Naive thymus-derived CD4-positive, alpha-beta T cell (primary cell): ENCODE measurements at regions of chr12 and their contacts with region 1.

Region 1: GRCh38 chr12:121668750-121669520 is 519 bp downstream of the MORN3 start:
- DNase-seq: peak in 7 of 9 donors; percentile 32 to 66 (median 56)
- ATAC-seq: no peak
- H3K4me3 ChIP-seq: no peak overlapping the region
- H3K4me3 Mint-ChIP-seq: peak overlapping the region in 9 of 10 donors; percentile 34 to 62 (median 54)
- H3K27ac ChIP-seq: peak overlapping the region; percentile 36
- H3K27ac Mint-ChIP-seq: peak overlapping the region; percentile 49 to 93 (median 75)
- H3K4me1 ChIP-seq: peaks cover 16 to 53% of the 10 kb centered on the region in 2 donors
- H3K4me1 Mint-ChIP-seq: peaks cover 44 to 71% (median 57%) of the 10 kb centered on the region in 7 donors
- H3K27me3 ChIP-seq: no peaks in the 10 kb centered on the region
- H3K27me3 Mint-ChIP-seq: no peaks in the 10 kb centered on the region

Region 2: GRCh38 chr12:121499929-121500793 is 168.8 kb before region 1 on chr12:
- CTCF ChIA-PET with region 1: interaction called, 5 read pairs
- POLR2A ChIA-PET with region 1: interaction called, 6 read pairs
- intact Hi-C with region 1: loop called in 1 of 2 experiments (anchors 1 kb)
- DNase-seq: peak; percentile 44 to 80 (median 68)
- ATAC-seq: peak; percentile 93
- H3K4me3 ChIP-seq: no peak overlapping the region
- H3K4me3 Mint-ChIP-seq: no peak overlapping the region
- H3K27ac ChIP-seq: no peak overlapping the region
- H3K27ac Mint-ChIP-seq: peak overlapping the region in 2 of 9 donors; percentile 8 to 32
- H3K4me1 ChIP-seq: peaks cover 0 to 11% of the 10 kb centered on the region in 2 donors
- H3K4me1 Mint-ChIP-seq: peaks cover 0 to 19% (median 13%) of the 10 kb centered on the region in 7 donors
- H3K27me3 ChIP-seq: no peaks in the 10 kb centered on the region
- H3K27me3 Mint-ChIP-seq: no peaks in the 10 kb centered on the region

Region 3: GRCh38 chr12:121590476-121591143 is 78.3 kb before region 1 on chr12:
- CTCF ChIA-PET with region 1: interaction called, 3 read pairs
- POLR2A ChIA-PET with region 1: interaction called, 10 read pairs
- intact Hi-C with region 1: loop called (anchors 1 kb)
- DNase-seq: peak; percentile 38 to 88 (median 83)
- ATAC-seq: peak; percentile 81
- H3K4me3 ChIP-seq: peak overlapping the region; percentile 76
- H3K4me3 Mint-ChIP-seq: peak overlapping the region; percentile 59 to 94 (median 90)
- H3K27ac ChIP-seq: peak overlapping the region; percentile 90
- H3K27ac Mint-ChIP-seq: peak overlapping the region; percentile 97 to 100 (median 99)
- H3K4me1 ChIP-seq: peaks cover 24 to 26% of the 10 kb centered on the region in 2 donors
- H3K4me1 Mint-ChIP-seq: peaks cover 16 to 53% (median 38%) of the 10 kb centered on the region in 7 donors
- H3K27me3 ChIP-seq: no peaks in the 10 kb centered on the region
- H3K27me3 Mint-ChIP-seq: peaks cover 0 to 3% (median 0%) of the 10 kb centered on the region in 5 donors

Region 4: DNA sequence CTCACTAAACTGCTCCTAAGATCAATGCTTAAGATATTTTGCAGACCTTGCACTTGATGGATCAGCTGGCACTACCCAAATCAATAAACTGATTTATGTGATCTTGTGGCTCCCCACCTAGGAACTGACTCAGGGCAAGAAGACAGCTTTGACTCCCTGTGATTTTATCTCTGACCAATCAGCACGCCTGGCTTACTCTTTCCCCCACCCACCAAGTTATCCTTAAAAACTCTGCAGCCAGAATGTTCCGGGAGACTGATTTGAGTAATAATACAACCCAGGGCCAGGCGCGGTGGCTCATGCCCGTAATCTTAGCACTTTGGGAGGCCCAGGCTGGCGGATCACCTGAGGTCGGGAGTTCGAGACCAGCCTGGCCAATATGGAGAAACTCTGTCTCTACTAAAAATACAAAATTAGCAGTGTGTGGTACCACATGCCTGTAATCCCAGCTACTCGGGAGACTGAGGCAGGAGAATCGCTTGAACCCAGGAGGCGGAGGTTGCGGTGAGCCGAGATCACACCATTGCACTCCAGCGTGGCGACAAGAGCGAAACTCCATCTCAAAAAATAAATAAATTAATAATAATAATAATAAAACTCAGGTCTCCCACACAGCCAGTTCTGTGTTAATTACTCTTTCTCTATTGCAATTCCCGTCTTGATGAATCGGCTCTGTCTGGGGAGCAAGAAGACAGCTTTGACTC is 11.5 kb before region 1 on chr12:
- CTCF ChIA-PET with region 1: interaction called, 17 read pairs
- POLR2A ChIA-PET with region 1: interaction called, 54 read pairs
- intact Hi-C with region 1: loop called (anchors 1 kb)
- DNase-seq: peak in 1 of 9 donors; percentile 37
- ATAC-seq: no peak
- H3K4me3 ChIP-seq: no peak overlapping the region
- H3K4me3 Mint-ChIP-seq: peak overlapping the region; percentile 31 to 99 (median 68)
- H3K27ac ChIP-seq: peak overlapping the region; percentile 35
- H3K27ac Mint-ChIP-seq: peak overlapping the region; percentile 70 to 100 (median 97)
- H3K4me1 ChIP-seq: peaks cover 38 to 47% of the 10 kb centered on the region in 2 donors
- H3K4me1 Mint-ChIP-seq: peaks cover 43 to 77% (median 64%) of the 10 kb centered on the region in 7 donors
- H3K27me3 ChIP-seq: no peaks in the 10 kb centered on the region
- H3K27me3 Mint-ChIP-seq: no peaks in the 10 kb centered on the region

Region 5: GRCh38 chr12:121712461-121713256 is 43.7 kb after region 1 on chr12 and contains the start of gene TMEM120B:
- CTCF ChIA-PET with region 1: no interaction called
- POLR2A ChIA-PET with region 1: interaction called, 17 read pairs
- intact Hi-C with region 1: no loop called
- DNase-seq: peak; percentile 75 to 91 (median 86)
- ATAC-seq: peak; percentile 97
- H3K4me3 ChIP-seq: peak within 1 kb of the TSS; percentile 99
- H3K4me3 Mint-ChIP-seq: peak within 1 kb of the TSS; percentile 84 to 97 (median 94)
- H3K27ac ChIP-seq: peak within 1 kb of the TSS; percentile 82
- H3K27ac Mint-ChIP-seq: peak within 1 kb of the TSS; percentile 86 to 96 (median 92)
- H3K4me1 ChIP-seq: peaks cover 11 to 12% of the 10 kb centered on the region in 2 donors
- H3K4me1 Mint-ChIP-seq: peaks cover 7 to 37% (median 26%) of the 10 kb centered on the region in 7 donors
- H3K27me3 ChIP-seq: no peaks in the 10 kb centered on the region
- H3K27me3 Mint-ChIP-seq: no peaks in the 10 kb centered on the region
- total RNA-seq, gene TMEM120B: 7.3 to 14.3 (median 9.2) TPM